Body of pancreas (tissue), 4 donors: ENCODE measurements at regions of chr9 and their contacts with region 1.

Region 1: GRCh38 chr9:92781923-92782322 is 17.3 kb upstream of the BICD2 start:
- DNase-seq: no peak
- ATAC-seq: no peak
- H3K4me3 ChIP-seq: no peak overlapping the region
- H3K27ac ChIP-seq: no peak overlapping the region
- H3K4me1 ChIP-seq: no peaks in the 10 kb centered on the region
- H3K27me3 ChIP-seq: no peaks in the 10 kb centered on the region
- CTCF ChIP-seq: no peak
- POLR2A ChIP-seq: no peak

Region 2: GRCh38 chr9:92716557-92716956 is 65.4 kb before region 1 on chr9:
- intact Hi-C with region 1: loop called (anchors 5 kb)
- DNase-seq: peak; percentile 49 to 74 (median 62)
- ATAC-seq: peak; percentile 55
- H3K4me3 ChIP-seq: no peak overlapping the region
- H3K27ac ChIP-seq: no peak overlapping the region
- H3K4me1 ChIP-seq: no peaks in the 10 kb centered on the region
- H3K27me3 ChIP-seq: no peaks in the 10 kb centered on the region
- CTCF ChIP-seq: peak; percentile 57 to 83 (median 76)
- POLR2A ChIP-seq: no peak